ENCODE measurements at regions of chr16 and their contacts with region 1.

Region 1: DNA sequence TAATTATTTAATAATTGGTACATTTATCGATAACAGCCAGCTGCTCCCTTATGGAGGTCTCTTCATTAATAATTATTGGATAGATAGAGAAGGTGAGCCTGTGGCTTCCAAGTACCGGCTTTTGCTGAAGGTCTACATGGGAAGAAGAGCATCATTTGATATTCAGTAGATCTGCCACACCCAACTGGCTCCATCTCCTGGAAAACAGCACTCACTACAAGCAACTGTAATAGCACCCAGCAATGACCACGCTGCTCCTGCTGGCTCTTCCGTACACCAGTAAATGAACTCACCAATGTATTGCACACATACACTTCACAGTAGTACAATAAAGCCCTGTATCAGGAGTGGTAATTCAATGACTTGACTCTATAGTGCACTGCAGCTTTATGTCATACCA is 19.5 kb downstream of the MARVELD3 start:
- DNase-seq: peak; percentile 38
- ATAC-seq: peak; percentile 61
- H3K4me3 ChIP-seq: no peak overlapping the region
- H3K27ac ChIP-seq: no peak overlapping the region
- H3K4me1 ChIP-seq: peaks cover 5% of the 10 kb centered on the region; the same call in 1 of the 2 replicates
- H3K27me3 ChIP-seq: no peaks in the 10 kb centered on the region
- CTCF ChIP-seq: peak; percentile 42
- POLR2A ChIP-seq: no peak
- RAD21 ChIP-seq: peak; percentile 45

Region 2: DNA sequence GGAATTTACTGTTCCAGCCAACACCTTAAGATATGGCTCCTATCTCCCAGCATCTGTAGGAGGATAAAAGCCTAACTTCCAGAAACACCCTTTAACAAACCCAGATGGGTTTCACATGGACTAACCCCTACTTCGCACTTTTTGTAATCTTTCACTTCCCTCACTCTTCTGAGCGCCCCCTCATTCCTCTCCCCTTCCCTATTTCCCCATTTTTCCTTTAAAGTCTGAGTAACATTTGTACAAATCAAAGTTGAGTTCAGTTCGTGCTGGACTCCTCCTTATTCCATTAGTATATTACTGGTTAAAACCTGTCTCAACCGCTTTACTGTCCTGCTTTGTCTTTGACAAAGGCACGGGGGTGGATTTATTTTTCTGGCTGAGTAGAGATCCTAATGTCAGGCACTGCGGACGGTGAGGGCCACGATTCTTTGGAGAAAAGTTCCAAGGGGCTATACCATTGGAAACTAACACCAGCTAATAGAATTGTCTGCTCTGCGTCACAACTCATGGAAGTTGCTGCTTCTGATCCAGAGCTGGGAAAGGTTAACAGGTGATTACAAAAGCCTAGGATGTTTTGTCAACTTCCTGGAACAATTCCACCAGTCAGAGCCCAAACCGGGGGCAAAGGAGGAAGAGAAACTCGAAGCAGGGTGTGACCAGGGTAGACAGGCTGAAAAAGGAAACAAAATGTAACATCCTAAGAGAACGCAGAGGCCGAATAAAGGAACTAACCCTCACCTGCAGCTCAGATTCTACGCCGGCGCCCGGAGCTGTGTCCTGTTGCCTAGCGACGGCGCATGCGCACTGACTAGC is 81.1 kb before region 1 on chr16:
- CTCF ChIA-PET with region 1: no interaction called
- POLR2A ChIA-PET with region 1: no interaction called
- dilution Hi-C with region 1: no loop called
- in situ Hi-C with region 1: no loop called
- intact Hi-C with region 1: loop called (anchors 1 kb)
- DNase-seq: no peak
- ATAC-seq: no peak
- H3K4me3 ChIP-seq: peak overlapping the region; percentile 48
- H3K27ac ChIP-seq: no peak overlapping the region
- H3K4me1 ChIP-seq: no peaks in the 10 kb centered on the region
- H3K27me3 ChIP-seq: no peaks in the 10 kb centered on the region; the same call in 1 of the 2 replicates
- CTCF ChIP-seq: no peak
- POLR2A ChIP-seq: no peak
- RAD21 ChIP-seq: no peak

Region 3: GRCh38 chr16:71626018-71626857 is 19.2 kb before region 1 on chr16 and contains the start of gene MARVELD3:
- CTCF ChIA-PET with region 1: no interaction called
- POLR2A ChIA-PET with region 1: no interaction called
- dilution Hi-C with region 1: no loop called
- in situ Hi-C with region 1: no loop called
- intact Hi-C with region 1: no loop called
- DNase-seq: no peak
- ATAC-seq: peak; percentile 38
- H3K4me3 ChIP-seq: peak within 1 kb of the TSS; percentile 15
- H3K27ac ChIP-seq: no peak within 1 kb of the TSS
- H3K4me1 ChIP-seq: peaks cover 3% of the 10 kb centered on the region; the same call in 1 of the 2 replicates
- H3K27me3 ChIP-seq: peaks cover 38% of the 10 kb centered on the region
- CTCF ChIP-seq: no peak
- POLR2A ChIP-seq: no peak
- RAD21 ChIP-seq: no peak
- total RNA-seq, gene MARVELD3: not detected in 2 replicates

Region 4: GRCh38 chr16:71723537-71724319 is 78.3 kb after region 1 on chr16:
- CTCF ChIA-PET with region 1: no interaction called
- POLR2A ChIA-PET with region 1: no interaction called
- dilution Hi-C with region 1: no loop called
- in situ Hi-C with region 1: no loop called
- intact Hi-C with region 1: no loop called
- DNase-seq: peak; percentile 49
- ATAC-seq: peak; percentile 81
- H3K4me3 ChIP-seq: peak overlapping the region; percentile 86
- H3K27ac ChIP-seq: peak overlapping the region; percentile 63; the same call in 1 of the 2 replicates
- H3K4me1 ChIP-seq: peaks cover 5% of the 10 kb centered on the region
- H3K27me3 ChIP-seq: no peaks in the 10 kb centered on the region
- CTCF ChIP-seq: no peak
- POLR2A ChIP-seq: peak; percentile 51; the same call in 1 of the 2 replicates
- RAD21 ChIP-seq: no peak

Region 5: DNA sequence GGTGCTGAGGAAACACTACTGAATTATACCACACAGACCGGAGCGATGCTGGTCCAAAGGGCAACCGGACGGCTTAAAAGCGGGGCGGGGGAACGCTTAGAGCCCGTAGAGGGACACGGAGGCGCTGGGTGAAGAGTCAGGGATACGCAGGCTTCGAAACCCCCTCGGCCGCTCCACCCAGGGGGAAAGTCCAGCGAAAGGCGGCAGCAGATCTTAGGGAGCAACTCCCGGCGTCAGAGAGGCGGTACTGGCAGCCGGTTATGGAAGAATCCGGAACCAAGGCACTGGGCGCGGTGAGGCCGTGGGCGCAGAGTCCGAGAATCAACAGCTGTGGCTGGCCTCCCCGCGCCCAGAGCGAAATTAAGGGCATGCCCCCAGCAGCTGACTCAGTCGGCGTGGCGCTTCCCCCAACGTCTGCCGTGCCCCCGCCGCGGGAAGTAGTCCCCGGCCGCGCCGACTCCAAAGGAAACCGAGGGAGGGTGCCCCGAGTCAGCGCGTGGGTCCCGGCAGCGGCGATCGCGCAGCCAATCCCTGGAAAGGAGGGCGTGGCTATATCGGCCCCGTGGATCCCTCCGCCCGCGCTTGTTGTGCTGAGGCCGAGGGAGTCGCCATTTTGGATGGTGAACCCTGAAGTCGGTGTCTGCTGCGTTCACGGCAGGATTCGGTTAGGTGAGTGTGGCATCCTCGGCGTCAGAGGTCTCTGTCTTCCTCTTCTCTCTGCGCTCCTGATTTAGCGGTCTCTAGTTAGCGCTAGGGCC is 249.6 kb after region 1 on chr16 and contains the start of gene IST1:
- CTCF ChIA-PET with region 1: no interaction called
- POLR2A ChIA-PET with region 1: no interaction called
- dilution Hi-C with region 1: no loop called
- in situ Hi-C with region 1: no loop called
- intact Hi-C with region 1: no loop called
- DNase-seq: peak; percentile 99
- ATAC-seq: peak; percentile 96
- H3K4me3 ChIP-seq: peak within 1 kb of the TSS; percentile 80
- H3K27ac ChIP-seq: peak within 1 kb of the TSS; percentile 97
- H3K4me1 ChIP-seq: peaks cover 2% of the 10 kb centered on the region
- H3K27me3 ChIP-seq: no peaks in the 10 kb centered on the region
- CTCF ChIP-seq: no peak
- POLR2A ChIP-seq: peak; percentile 92
- RAD21 ChIP-seq: no peak
- total RNA-seq, gene IST1: 175 and 186 TPM in 2 replicates

Measured in IMR-90 (cell line).